Adrenal gland (tissue), 19 donors: ENCODE measurements at regions of chr7 and their contacts with region 1.

Region 1: DNA sequence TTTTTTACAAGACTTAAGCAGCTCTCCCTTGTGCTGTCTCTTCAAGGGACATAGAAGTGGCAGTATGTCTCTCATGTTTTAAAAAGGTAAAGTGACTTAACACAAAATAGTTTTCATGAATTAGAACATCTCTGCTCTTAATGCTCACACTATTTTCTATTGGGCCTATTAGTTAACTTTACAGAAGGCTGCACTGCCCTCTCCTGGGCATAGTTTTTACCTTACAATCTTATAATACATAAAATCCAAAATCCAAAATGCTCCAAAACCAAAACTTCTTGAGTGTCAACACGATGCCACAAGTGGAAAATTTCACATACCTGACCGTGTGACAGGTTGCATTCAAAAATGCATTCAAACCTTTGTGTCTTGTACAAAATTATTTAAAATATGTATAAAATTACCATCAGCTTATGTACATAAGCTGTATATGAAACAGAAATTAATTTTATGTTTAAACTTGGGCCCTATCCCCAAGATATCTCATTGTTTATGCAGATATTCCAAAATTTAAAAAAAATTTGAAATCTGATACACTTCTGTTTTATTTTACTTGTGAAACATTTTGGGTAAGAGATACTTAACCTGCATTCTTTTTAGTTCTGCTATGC is 25.8 kb downstream of the TES start:
- DNase-seq: peak; percentile 37 to 74 (median 49)
- H3K4me3 ChIP-seq: no peak overlapping the region
- H3K27ac ChIP-seq: no peak overlapping the region
- H3K4me1 ChIP-seq: peaks cover 0 to 8% of the 10 kb centered on the region in 2 donors
- H3K27me3 ChIP-seq: no peaks in the 10 kb centered on the region
- CTCF ChIP-seq: peak; percentile 37 to 70 (median 66)
- POLR2A ChIP-seq: no peak

Region 2: GRCh38 chr7:116173051-116174028 is 62.8 kb before region 1 on chr7:
- intact Hi-C with region 1: loop called (anchors 5 kb)
- DNase-seq: peak in 1 of 7 donors; percentile 12
- H3K4me3 ChIP-seq: no peak overlapping the region
- H3K27ac ChIP-seq: no peak overlapping the region
- H3K4me1 ChIP-seq: no peaks in the 10 kb centered on the region
- H3K27me3 ChIP-seq: no peaks in the 10 kb centered on the region
- CTCF ChIP-seq: peak; percentile 36 to 77 (median 66)
- POLR2A ChIP-seq: no peak

Region 3: DNA sequence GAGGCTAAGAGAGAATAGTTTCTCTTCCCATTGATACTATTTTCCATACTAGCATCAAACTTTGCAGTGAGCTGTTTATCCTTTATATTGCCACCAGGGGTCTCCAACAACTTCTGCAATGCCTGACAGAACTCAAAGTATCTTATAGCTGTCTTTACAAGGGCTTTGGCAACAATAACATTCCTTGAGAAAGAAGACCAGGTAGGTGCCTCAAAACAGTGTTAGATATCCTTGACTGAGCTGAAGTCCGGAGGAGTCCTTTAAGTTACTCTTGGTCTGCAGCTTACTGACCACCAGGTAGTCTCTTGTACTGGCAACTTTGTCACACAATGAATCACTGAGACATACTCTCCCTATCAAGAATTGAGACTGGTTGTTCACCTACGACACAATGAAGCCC is 55.8 kb before region 1 on chr7:
- intact Hi-C with region 1: loop called (anchors 2 to 5 kb)
- DNase-seq: peak in 1 of 7 donors; percentile 27
- H3K4me3 ChIP-seq: no peak overlapping the region
- H3K27ac ChIP-seq: no peak overlapping the region
- H3K4me1 ChIP-seq: no peaks in the 10 kb centered on the region
- H3K27me3 ChIP-seq: no peaks in the 10 kb centered on the region
- CTCF ChIP-seq: peak; percentile 61 to 84 (median 72)
- POLR2A ChIP-seq: no peak

Region 4: GRCh38 chr7:116384936-116385635 is 149.0 kb after region 1 on chr7:
- intact Hi-C with region 1: no loop called
- DNase-seq: no peak
- H3K4me3 ChIP-seq: no peak overlapping the region
- H3K27ac ChIP-seq: no peak overlapping the region
- H3K4me1 ChIP-seq: no peaks in the 10 kb centered on the region
- H3K27me3 ChIP-seq: no peaks in the 10 kb centered on the region
- CTCF ChIP-seq: no peak
- POLR2A ChIP-seq: no peak